PC-3 (cell line): ENCODE measurements at regions of chr2 and their contacts with region 1.

Region 1: GRCh38 chr2:161250864-161251436 is 57.3 kb upstream of the PSMD14 start:
- DNase-seq: peak; percentile 83
- ATAC-seq: peak; percentile 98
- H3K4me3 ChIP-seq: no peak overlapping the region
- H3K27ac ChIP-seq: no peak overlapping the region
- H3K4me1 ChIP-seq: peaks cover 7% of the 10 kb centered on the region; the same call in 1 of the 2 replicates
- H3K27me3 ChIP-seq: no peaks in the 10 kb centered on the region
- CTCF ChIP-seq: peak; percentile 88

Region 2: GRCh38 chr2:161273038-161273760 is 22.2 kb after region 1 on chr2:
- CTCF ChIA-PET with region 1: no interaction called
- POLR2A ChIA-PET with region 1: no interaction called
- intact Hi-C with region 1: loop called (anchors 2 kb)
- DNase-seq: peak; percentile 90
- ATAC-seq: peak; percentile 78
- H3K4me3 ChIP-seq: no peak overlapping the region
- H3K27ac ChIP-seq: no peak overlapping the region
- H3K4me1 ChIP-seq: no peaks in the 10 kb centered on the region
- H3K27me3 ChIP-seq: no peaks in the 10 kb centered on the region
- CTCF ChIP-seq: peak; percentile 83